Transverse colon (tissue), 4 donors: ENCODE measurements at regions of chr5 and their contacts with region 1.

Region 1: GRCh38 chr5:140710899-140711552 is 10.8 kb downstream of the ZMAT2 start:
- DNase-seq: peak; percentile 90
- H3K4me3 ChIP-seq: peak overlapping the region; percentile 11 to 64 (median 39)
- H3K27ac ChIP-seq: peak overlapping the region; percentile 88 to 92 (median 89)
- H3K4me1 ChIP-seq: peaks cover 0 to 21% (median 11%) of the 10 kb centered on the region in 4 donors
- H3K27me3 ChIP-seq: no peaks in the 10 kb centered on the region
- CTCF ChIP-seq: no peak
- EP300 ChIP-seq: no peak
- POLR2A ChIP-seq: peak; percentile 69

Region 2: DNA sequence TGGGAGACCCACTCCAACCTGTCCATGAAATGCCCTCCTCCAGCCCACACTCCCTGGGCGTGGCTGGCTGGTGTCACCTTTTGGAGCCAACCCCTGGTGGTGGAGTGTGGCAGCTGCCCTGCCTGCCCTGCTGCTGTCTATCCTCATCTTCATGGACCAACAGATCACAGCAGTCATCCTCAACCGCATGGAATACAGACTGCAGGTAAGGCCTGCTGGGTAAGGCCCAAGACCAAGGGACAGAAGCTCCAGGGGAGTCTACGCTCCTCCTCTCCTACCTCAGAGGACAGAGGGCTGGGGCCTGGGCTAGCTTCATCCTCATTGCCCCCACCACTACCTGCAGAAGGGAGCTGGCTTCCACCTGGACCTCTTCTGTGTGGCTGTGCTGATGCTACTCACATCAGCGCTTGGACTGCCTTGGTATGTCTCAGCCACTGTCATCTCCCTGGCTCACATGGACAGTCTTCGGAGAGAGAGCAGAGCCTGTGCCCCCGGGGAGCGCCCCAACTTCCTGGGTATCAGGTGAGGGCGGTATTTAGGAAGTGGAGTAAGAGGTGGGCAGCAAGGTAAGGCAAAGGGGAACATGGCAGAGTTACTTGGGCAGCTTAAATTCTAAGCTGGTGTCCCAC is 343.5 kb before region 1 on chr5:
- in situ Hi-C with region 1: loop called in 1 of 4 experiments (anchors 5 kb)
- intact Hi-C with region 1: no loop called
- DNase-seq: no peak
- H3K4me3 ChIP-seq: no peak overlapping the region
- H3K27ac ChIP-seq: no peak overlapping the region
- H3K4me1 ChIP-seq: peaks cover 0 to 17% (median 7%) of the 10 kb centered on the region in 4 donors
- H3K27me3 ChIP-seq: no peaks in the 10 kb centered on the region
- CTCF ChIP-seq: peak in 1 of 5 experiments; percentile 25
- EP300 ChIP-seq: no peak
- POLR2A ChIP-seq: no peak